ENCODE measurements at regions of chr5 and their contacts with region 1.

Region 1: DNA sequence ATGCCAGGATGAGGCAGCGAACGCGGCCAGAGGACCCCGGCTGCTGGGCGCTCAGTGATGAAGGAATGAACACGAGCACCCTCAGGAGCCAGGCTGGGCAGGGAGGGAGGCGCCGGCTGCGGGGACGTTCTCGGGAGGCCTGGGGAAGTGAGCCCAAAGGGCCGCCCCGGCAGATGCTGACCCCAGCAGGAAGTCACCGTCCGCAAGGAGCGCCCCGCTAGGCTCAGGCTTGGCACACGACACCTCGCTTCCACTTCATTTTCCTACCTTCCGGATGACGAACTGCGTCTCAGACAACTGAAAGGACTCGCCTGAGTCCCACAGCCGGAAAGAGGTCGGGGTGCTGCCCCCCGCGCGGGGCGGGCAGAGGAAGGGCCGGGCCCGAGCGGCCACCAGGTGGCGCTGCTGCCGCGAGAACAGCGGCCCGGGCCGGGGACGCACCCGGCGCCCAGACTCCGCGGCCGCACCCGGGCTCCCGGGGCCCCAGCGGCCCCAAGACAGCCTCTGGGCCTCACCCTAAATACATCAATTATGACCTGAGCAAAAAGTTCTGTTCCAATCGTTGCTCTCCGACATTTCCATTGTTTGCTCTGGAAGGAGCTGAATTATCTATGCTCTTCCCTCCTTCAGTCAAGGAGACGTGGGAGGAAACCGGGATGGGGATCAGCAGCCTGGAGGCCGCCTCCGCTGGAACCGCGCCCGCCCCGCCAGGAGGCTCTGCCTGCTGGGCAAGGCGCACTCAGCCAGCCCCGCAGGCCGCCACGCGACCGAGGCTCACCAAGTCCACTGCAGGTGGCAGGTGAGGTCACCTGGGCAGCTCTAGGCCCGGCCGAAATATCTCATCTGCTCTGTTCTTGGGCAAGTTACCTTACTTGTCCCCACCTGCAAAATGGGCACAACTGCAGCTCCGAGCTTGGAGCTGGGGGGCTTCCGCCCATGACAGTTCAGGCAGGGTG is 107.0 kb downstream of the ZNF354C start:
- DNase-seq: peak; percentile 78
- H3K4me3 ChIP-seq: peak overlapping the region; percentile 49
- H3K27ac ChIP-seq: no peak overlapping the region
- H3K4me1 ChIP-seq: no peaks in the 10 kb centered on the region
- H3K27me3 ChIP-seq: no peaks in the 10 kb centered on the region

Region 2: GRCh38 chr5:179345433-179346321 is 178.5 kb after region 1 on chr5 and contains the start of gene ADAMTS2:
- in situ Hi-C with region 1: loop called (anchors 10 kb)
- DNase-seq: peak; percentile 86
- H3K4me3 ChIP-seq: peak within 1 kb of the TSS; percentile 85
- H3K27ac ChIP-seq: peak within 1 kb of the TSS; percentile 43
- H3K4me1 ChIP-seq: peaks cover 14% of the 10 kb centered on the region; the same call in 1 of the 2 replicates
- H3K27me3 ChIP-seq: no peaks in the 10 kb centered on the region
- total RNA-seq, gene ADAMTS2: 132 and 141 TPM in 2 replicates

Region 3: DNA sequence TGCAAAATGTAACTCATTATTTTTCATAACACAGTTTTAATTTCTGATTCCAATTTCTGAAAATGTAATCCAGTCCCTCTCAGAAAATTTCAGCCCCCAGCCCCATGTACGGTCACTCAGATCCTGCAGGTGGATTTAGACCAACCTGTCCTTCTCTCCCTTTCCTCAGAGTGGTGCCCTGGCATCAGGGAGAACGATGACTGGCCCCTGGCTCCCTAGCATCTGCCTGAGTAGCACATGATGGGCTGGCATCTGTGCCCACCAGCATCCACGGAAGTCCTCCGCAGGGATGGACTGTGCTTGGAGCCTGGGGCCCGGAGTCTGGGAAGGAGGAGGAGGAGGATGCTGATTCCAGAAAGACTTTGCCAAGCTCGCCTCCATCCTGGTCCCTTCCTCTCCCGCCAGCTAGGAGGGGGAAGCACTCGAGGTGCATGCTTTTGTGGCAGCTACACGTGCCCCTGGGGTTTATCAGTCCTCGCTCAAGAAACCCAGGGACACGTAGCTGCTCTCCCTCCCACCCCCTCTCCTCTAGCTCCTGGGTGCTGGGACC is 328.8 kb after region 1 on chr5:
- in situ Hi-C with region 1: loop called (anchors 10 kb)
- DNase-seq: no peak
- H3K4me3 ChIP-seq: no peak overlapping the region
- H3K27ac ChIP-seq: no peak overlapping the region
- H3K4me1 ChIP-seq: no peaks in the 10 kb centered on the region
- H3K27me3 ChIP-seq: no peaks in the 10 kb centered on the region; the same call in 1 of the 2 replicates